Activated CD8-positive, alpha-beta T cell treated with anti-CD3 and anti-CD28 coated beads, Interleukin-2, amount 10 ng/mL, durations not matched to agents 7 days and 5 days (primary cell): ENCODE measurements at regions of chr9 and their contacts with region 1.

Region 1: GRCh38 chr9:122264360-122265148 is at the starts of genes MRRF and RBM18:
- DNase-seq: peak; percentile 93
- ATAC-seq: peak; percentile 87
- H3K4me3 Mint-ChIP-seq: peak within 1 kb of the TSS; percentile 97
- H3K27ac Mint-ChIP-seq: peak within 1 kb of the TSS; percentile 99
- H3K4me1 Mint-ChIP-seq: peaks cover 39% of the 10 kb centered on the region
- H3K27me3 Mint-ChIP-seq: no peaks in the 10 kb centered on the region
- total RNA-seq, gene MRRF: 38.6 to 39.1 TPM
- total RNA-seq, gene RBM18: 22.9 to 23.9 TPM

Region 2: GRCh38 chr9:122286764-122287163 is 22.2 kb after region 1 on chr9:
- CTCF ChIA-PET with region 1: interaction called, 3 read pairs
- POLR2A ChIA-PET with region 1: interaction called, 10 read pairs
- DNase-seq: no peak
- ATAC-seq: no peak
- H3K4me3 Mint-ChIP-seq: no peak overlapping the region
- H3K27ac Mint-ChIP-seq: no peak overlapping the region
- H3K4me1 Mint-ChIP-seq: no peaks in the 10 kb centered on the region
- H3K27me3 Mint-ChIP-seq: no peaks in the 10 kb centered on the region

Region 3: GRCh38 chr9:122406070-122406890 is 141.7 kb after region 1 on chr9:
- CTCF ChIA-PET with region 1: no interaction called
- POLR2A ChIA-PET with region 1: no interaction called
- DNase-seq: no peak
- ATAC-seq: no peak
- H3K4me3 Mint-ChIP-seq: no peak overlapping the region
- H3K27ac Mint-ChIP-seq: no peak overlapping the region
- H3K4me1 Mint-ChIP-seq: peaks cover 9% of the 10 kb centered on the region
- H3K27me3 Mint-ChIP-seq: peaks cover 4% of the 10 kb centered on the region